ENCODE measurements at regions of chr17 and their contacts with region 1.

Region 1: DNA sequence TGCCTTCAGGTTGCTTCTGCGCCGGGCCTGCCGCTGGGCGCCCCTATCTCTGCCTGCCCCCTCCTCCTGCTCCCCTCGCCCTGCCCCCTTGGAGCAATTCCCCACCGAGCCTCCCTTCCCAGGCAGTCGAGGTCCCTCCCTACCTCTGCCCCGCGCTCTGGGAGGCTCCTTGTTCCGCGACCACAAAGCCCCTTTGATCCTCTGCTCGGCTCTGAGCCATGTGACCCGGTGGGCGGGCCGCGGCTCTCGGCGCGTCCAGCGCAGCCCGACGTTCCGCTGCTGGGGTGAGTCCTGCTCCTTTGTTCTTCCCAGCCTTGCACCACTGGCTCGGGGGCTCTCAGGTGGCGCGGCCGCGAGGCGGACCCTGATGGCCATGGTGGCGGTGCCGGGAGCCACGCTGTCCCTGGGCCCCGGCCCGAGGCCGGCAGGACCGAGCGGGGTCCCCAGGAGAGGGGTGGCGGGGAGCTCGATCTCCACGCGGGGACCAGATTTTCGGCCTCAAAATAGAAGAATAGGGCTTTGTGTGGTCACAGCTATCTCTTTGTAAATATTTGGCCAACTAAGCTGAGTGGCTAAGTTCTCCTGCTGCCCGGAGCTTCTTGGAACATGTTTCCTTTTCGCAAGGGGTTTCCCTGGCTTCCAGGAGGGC is 310.6 kb downstream of the SEC14L1 start:
- DNase-seq: peak; percentile 87
- ATAC-seq: peak; percentile 63

Region 2: GRCh38 chr17:77288100-77288619 is 163.2 kb before region 1 on chr17:
- intact Hi-C with region 1: no loop called
- DNase-seq: peak; percentile 37
- ATAC-seq: no peak

Region 3: DNA sequence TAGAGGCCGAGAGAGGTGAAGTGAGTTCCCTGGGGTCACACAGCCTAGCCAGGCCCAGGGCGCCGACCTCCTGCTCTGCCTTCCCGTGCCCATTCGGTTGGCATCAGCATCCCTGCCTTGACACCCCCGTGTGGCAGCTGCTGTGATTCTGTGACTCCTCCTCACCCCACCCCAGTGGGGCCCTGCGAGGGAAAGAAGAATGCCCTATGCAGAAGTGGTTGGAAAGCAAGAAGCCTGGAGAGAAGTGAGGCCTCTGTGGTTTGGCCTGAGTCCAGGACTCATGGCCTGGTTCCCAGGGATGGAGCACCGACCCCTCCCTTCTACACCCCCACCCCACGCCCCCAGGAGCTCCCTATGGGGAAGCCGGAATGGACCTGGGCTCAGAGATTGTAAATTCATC is 14.4 kb before region 1 on chr17:
- intact Hi-C with region 1: loop called (anchors 2 kb)
- DNase-seq: peak; percentile 82
- ATAC-seq: peak; percentile 27

Region 4: DNA sequence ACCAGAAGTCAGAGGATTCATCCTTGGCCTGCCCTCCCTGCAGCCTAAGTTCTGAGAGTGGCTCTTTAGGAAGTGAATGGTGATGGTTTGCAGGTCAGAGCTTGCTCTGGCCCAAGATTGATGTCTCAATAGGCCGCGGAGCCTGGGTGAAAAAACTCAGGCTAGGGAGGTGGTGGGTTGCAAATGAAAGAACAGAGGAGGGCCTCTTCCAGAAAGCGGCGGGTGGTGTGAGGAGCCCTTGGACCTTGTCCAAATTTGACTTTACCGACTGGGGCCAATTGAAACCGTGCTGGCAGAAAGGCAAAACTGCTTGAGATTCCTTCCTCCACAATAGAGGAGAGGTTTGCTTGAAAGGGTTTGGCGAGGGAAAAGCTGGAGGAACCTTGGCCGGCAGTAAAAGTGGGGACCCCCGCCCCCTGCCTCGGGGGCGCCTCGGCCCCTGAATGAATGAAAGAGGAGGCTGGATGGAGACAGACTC is 20.7 kb after region 1 on chr17:
- intact Hi-C with region 1: loop called (anchors 2 kb)
- DNase-seq: no peak
- ATAC-seq: peak; percentile 64

Region 5: GRCh38 chr17:77619851-77620250 is 168.5 kb after region 1 on chr17:
- intact Hi-C with region 1: no loop called
- DNase-seq: no peak
- ATAC-seq: no peak

Measured in Right ventricle myocardium inferior (tissue), 1 donor.